ENCODE measurements at regions of chr6 and their contacts with region 1.

Region 1: DNA sequence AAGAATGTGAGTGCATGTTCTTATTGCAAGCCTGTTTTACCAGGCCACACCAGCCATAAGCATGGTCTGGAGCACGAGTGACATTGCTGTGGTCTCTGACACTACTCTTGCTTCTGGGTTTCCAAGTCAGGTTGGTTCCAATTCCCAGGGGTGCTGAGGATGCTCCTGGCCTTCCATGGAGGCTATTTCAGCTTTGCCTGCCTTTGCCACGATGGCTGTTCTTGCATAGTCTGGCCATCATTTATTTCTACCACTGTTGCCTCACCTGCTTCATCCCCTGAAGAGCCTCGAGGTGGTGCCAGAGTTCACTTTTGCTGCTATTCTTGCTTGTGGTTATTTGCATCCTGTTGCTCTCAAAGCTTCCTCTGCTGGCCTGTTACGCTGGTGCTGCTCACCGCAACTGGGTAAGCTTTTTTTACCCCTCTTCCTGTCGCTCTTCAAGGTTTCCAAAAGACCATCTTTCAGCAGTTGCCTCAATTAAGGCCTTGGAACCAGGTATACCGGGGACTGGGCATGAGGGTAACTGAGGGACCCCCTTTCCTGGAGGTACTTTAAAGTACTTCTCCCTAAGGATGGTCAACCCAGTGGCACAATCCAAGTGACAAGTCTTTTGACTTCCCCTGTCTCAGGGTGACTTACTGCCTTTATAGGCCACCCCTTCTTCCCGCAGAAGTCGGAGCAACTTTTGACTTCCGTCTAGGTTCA is 64.5 kb downstream of the AKAP7 start:
- DNase-seq: peak; percentile 79
- ATAC-seq: peak; percentile 94
- H3K4me3 Mint-ChIP-seq: peak overlapping the region; percentile 69
- H3K27ac Mint-ChIP-seq: peak overlapping the region; percentile 90
- H3K4me1 Mint-ChIP-seq: peaks cover 55% of the 10 kb centered on the region
- H3K27me3 Mint-ChIP-seq: no peaks in the 10 kb centered on the region

Region 2: GRCh38 chr6:131182991-131183425 is 16.7 kb before region 1 on chr6:
- CTCF ChIA-PET with region 1: interaction called, 14 read pairs
- POLR2A ChIA-PET with region 1: no interaction called
- intact Hi-C with region 1: no loop called
- DNase-seq: peak; percentile 30
- ATAC-seq: peak; percentile 66
- H3K4me3 Mint-ChIP-seq: peak overlapping the region; percentile 42
- H3K27ac Mint-ChIP-seq: peak overlapping the region; percentile 87
- H3K4me1 Mint-ChIP-seq: peaks cover 10% of the 10 kb centered on the region
- H3K27me3 Mint-ChIP-seq: no peaks in the 10 kb centered on the region

Region 3: GRCh38 chr6:131281471-131282270 is 82.0 kb after region 1 on chr6:
- CTCF ChIA-PET with region 1: interaction called, 4 read pairs
- POLR2A ChIA-PET with region 1: no interaction called
- intact Hi-C with region 1: loop called in 1 of 2 experiments (anchors 5 kb)
- DNase-seq: peak; percentile 74
- ATAC-seq: peak; percentile 93
- H3K4me3 Mint-ChIP-seq: peak overlapping the region; percentile 53
- H3K27ac Mint-ChIP-seq: peak overlapping the region; percentile 90
- H3K4me1 Mint-ChIP-seq: peaks cover 35% of the 10 kb centered on the region
- H3K27me3 Mint-ChIP-seq: no peaks in the 10 kb centered on the region

Region 4: DNA sequence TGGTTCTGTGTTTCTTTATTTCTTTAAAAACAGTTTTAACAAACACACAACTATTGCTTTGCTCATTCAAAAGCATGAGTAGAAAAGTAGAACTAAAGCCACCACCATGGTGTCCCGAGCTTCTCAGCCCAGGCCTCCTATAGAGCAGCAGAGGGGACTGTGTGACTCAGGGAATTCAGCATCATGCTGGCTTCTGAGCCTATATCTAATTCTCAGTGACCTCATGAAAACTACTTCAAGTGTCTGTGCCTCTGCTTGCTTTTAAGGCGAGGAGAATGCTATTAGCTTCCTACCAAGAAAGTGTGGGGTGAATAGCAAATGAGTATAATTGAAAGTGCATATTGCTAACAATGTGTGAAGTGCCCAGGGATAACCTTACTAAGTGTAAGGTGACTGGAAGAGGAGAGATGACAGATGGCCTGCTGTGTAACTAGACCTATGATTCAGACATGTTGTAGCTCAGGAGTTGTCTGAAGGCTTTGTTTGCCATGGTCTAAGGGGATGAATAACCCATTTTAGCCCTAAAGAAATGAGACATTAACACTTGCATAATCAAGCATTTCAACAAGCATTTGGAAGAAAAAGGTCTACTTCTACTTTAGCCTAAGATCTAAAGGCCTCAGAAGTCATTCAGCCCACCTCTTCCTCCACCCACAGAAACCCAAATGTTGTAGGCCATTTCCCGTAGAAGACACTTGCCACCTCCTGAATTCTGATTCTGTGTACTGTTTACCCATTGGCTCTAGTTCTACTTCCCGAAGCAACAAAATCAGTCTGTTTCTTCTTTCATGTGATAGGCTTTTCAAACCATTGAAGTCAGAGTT is 251.8 kb after region 1 on chr6:
- CTCF ChIA-PET with region 1: no interaction called
- POLR2A ChIA-PET with region 1: no interaction called
- intact Hi-C with region 1: loop called (anchors 5 to 10 kb)
- DNase-seq: peak; percentile 18
- ATAC-seq: peak; percentile 95
- H3K4me3 Mint-ChIP-seq: no peak overlapping the region
- H3K27ac Mint-ChIP-seq: peak overlapping the region; percentile 84
- H3K4me1 Mint-ChIP-seq: peaks cover 32% of the 10 kb centered on the region
- H3K27me3 Mint-ChIP-seq: no peaks in the 10 kb centered on the region